SK-N-SH (cell line): ENCODE measurements at regions of chr2 and their contacts with region 1.

Region 1: GRCh38 chr2:88377641-88377991 is 74.9 kb downstream of the FOXI3 start:
- DNase-seq: no peak
- H3K4me3 ChIP-seq: no peak overlapping the region
- H3K27ac ChIP-seq: peak overlapping the region in 1 of 2 experiments; percentile 77; a peak in 2 of 4 replicates
- H3K4me1 ChIP-seq: peaks cover 0 to 5% of the 10 kb centered on the region in 2 experiments; a peak in 2 of 4 replicates
- H3K27me3 ChIP-seq: no peaks in the 10 kb centered on the region
- CTCF ChIP-seq: no peak
- EP300 ChIP-seq: no peak
- RAD21 ChIP-seq: no peak

Region 2: DNA sequence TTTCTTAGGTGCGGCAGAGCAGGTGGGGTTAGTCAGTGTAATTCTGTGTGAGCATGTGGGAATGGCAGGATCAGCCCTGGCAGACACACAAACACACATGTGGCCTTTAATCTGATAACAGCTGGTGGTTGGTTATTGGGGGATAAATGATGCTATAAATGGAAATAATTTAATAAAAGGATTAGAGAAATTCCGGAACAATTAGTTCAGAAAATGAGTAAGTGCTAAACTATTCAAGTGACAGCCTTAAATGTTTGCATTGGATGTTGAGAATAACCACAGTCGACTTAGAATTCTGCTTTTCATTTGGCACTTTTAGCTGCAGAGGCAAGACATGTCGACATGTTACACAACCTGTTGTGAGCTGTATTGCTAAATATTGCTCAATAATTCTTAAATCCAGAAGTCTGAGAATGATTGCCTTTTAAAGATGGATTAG is 302.7 kb before region 1 on chr2:
- CTCF ChIA-PET with region 1: no interaction called
- POLR2A ChIA-PET with region 1: no interaction called
- DNase-seq: no peak
- H3K4me3 ChIP-seq: no peak overlapping the region
- H3K27ac ChIP-seq: peak overlapping the region in 1 of 2 experiments; percentile 35; a peak in 1 of 4 replicates
- H3K4me1 ChIP-seq: peaks cover 3 to 18% of the 10 kb centered on the region in 2 experiments; a peak in 2 of 4 replicates
- H3K27me3 ChIP-seq: no peaks in the 10 kb centered on the region
- CTCF ChIP-seq: no peak
- EP300 ChIP-seq: peak; percentile 19 to 61; a peak in 2 of 4 replicates
- RAD21 ChIP-seq: no peak

Region 3: DNA sequence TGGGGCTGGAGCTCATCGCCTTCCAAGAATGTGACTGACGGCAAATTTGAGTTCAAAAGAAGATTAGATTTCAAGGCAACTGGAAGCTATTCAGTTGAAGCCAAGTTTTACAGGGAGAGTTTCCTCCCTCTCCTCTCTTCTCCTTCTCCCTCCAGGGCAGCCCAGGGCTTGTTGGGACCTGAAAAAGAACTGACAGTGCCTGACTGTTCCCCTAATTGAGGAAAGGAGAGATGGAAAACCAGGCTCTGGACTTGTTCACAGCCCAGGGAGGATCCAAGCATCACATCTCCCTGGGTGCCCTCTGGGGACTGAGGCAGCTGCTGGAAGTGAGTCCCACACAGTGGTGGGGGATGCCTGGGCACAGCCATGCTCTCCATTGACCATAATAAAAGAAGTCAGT is 119.4 kb before region 1 on chr2:
- CTCF ChIA-PET with region 1: no interaction called
- POLR2A ChIA-PET with region 1: no interaction called
- DNase-seq: no peak
- H3K4me3 ChIP-seq: no peak overlapping the region
- H3K27ac ChIP-seq: no peak overlapping the region
- H3K4me1 ChIP-seq: no peaks in the 10 kb centered on the region
- H3K27me3 ChIP-seq: no peaks in the 10 kb centered on the region
- CTCF ChIP-seq: no peak
- EP300 ChIP-seq: no peak
- RAD21 ChIP-seq: no peak

Region 4: DNA sequence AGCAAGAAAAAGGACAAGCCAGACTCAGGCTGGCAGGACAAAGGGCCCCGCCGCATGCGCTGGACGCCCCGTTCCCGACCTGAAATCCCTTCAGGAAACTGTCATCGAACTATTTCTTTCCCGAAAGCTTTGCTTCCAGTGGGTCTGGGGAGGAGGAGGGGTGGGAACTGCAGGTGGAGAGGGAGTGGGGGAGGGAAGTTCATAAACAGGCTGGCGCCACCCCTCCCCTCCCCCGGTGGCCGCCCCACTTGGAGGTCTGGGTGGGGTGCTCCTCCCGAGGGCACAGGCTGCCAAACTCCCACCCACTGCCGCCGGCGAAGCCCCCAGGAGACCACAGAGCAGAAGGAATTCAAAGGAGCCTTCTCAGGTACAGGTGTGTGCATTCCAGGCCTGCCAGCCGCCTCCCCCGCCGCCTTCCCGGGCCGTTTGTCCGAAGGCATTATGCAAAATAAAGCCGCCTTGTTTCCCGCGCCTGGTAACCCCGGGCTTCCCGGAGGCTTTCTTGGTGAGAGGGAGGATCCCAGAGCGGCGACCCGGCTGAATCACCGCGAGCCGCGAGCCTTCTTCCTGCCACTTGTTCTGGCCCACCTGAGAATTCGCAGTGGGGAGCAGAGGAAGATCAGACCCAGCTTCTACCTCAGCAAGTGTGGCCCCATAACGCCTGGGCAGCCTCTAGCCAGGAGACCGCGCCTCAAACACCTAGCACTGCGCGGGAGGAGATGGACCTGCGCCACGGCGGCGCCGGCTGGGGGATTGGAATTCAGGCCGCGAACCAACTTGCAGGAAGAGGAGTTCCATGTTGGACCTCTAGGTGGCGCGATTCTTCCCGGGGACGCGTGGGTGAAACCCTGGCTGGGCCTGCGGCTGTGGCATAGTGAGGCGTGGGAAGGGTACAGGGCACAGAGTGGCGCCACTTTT is 27.0 kb before region 1 on chr2:
- CTCF ChIA-PET with region 1: interaction called, 11 read pairs
- POLR2A ChIA-PET with region 1: no interaction called
- DNase-seq: peak; percentile 79
- H3K4me3 ChIP-seq: peak overlapping the region; percentile 10 to 57; a peak in 3 of 4 replicates
- H3K27ac ChIP-seq: no peak overlapping the region
- H3K4me1 ChIP-seq: no peaks in the 10 kb centered on the region; a peak in 1 of 4 replicates
- H3K27me3 ChIP-seq: no peaks in the 10 kb centered on the region
- CTCF ChIP-seq: peak; percentile 62
- EP300 ChIP-seq: no peak
- RAD21 ChIP-seq: peak; percentile 57

Region 5: GRCh38 chr2:88582030-88582429 is 204.4 kb after region 1 on chr2:
- CTCF ChIA-PET with region 1: no interaction called
- POLR2A ChIA-PET with region 1: no interaction called
- DNase-seq: no peak
- H3K4me3 ChIP-seq: no peak overlapping the region
- H3K27ac ChIP-seq: no peak overlapping the region
- H3K4me1 ChIP-seq: no peaks in the 10 kb centered on the region; a peak in 1 of 4 replicates
- H3K27me3 ChIP-seq: no peaks in the 10 kb centered on the region
- CTCF ChIP-seq: no peak
- EP300 ChIP-seq: no peak
- RAD21 ChIP-seq: no peak

Region 6: GRCh38 chr2:88765154-88765900 is 387.7 kb after region 1 on chr2:
- CTCF ChIA-PET with region 1: no interaction called
- POLR2A ChIA-PET with region 1: no interaction called
- DNase-seq: peak; percentile 52
- H3K4me3 ChIP-seq: peak overlapping the region; percentile 19 to 27; a peak in 2 of 4 replicates
- H3K27ac ChIP-seq: no peak overlapping the region
- H3K4me1 ChIP-seq: peaks cover 0 to 4% of the 10 kb centered on the region in 2 experiments; a peak in 1 of 4 replicates
- H3K27me3 ChIP-seq: no peaks in the 10 kb centered on the region; the same call in 1 of the 2 replicates
- CTCF ChIP-seq: no peak
- EP300 ChIP-seq: no peak
- RAD21 ChIP-seq: no peak